Breast epithelium (tissue), 4 donors: ENCODE measurements at regions of chr13 and their contacts with region 1.

Region 1: GRCh38 chr13:95403828-95404522 is 102.7 kb upstream of the ABCC4 start:
- DNase-seq: peak; percentile 40 to 78
- H3K4me3 ChIP-seq: peak overlapping the region; percentile 10 to 47 (median 31)
- H3K27ac ChIP-seq: no peak overlapping the region
- H3K4me1 ChIP-seq: no peaks in the 10 kb centered on the region
- H3K27me3 ChIP-seq: no peaks in the 10 kb centered on the region
- CTCF ChIP-seq: peak; percentile 54 to 93 (median 76)
- POLR2A ChIP-seq: no peak

Region 2: DNA sequence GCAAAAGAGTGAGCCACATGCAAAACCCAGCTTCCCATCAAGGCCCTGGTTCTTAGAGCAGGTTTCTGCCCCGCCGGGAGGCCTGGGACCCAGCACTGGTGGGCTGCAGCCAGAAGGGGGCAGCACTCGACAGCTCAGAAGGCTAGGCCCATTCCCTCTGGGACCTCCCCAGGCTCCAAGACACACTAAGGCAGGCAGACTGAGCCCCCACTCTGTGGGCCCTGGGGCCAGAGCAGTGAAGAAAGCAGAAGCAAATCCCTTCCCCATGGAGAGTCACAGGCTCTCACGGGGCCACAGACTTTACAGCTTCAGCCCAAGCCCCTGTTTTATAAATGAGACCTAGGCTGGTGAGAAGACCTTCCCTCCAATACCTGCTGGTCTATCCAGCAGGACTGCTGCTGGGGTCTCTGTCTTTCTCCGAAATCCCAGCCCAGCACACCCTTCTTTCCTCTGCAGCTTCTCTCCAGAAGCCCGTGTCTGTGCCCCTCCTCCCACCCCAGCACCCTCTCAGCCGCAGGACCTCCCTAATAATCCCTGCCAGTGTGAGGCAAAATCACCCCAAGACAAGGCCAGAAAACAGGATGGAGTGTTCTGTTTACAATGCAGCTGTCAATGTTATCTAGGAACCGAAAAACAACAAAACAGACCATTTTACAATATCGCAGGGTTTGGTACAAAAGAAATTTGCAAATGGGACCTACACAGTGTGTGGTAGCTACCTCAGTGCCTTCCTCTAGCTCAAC is 212.0 kb before region 1 on chr13:
- intact Hi-C with region 1: loop called (anchors 10 kb)
- DNase-seq: no peak
- H3K4me3 ChIP-seq: no peak overlapping the region
- H3K27ac ChIP-seq: no peak overlapping the region
- H3K4me1 ChIP-seq: no peaks in the 10 kb centered on the region
- H3K27me3 ChIP-seq: no peaks in the 10 kb centered on the region
- CTCF ChIP-seq: peak in 2 of 3 donors; percentile 28 to 53
- POLR2A ChIP-seq: no peak

Region 3: GRCh38 chr13:95387733-95388207 is 16.2 kb before region 1 on chr13:
- intact Hi-C with region 1: no loop called
- DNase-seq: no peak
- H3K4me3 ChIP-seq: no peak overlapping the region
- H3K27ac ChIP-seq: no peak overlapping the region
- H3K4me1 ChIP-seq: no peaks in the 10 kb centered on the region
- H3K27me3 ChIP-seq: peaks cover 0 to 9% of the 10 kb centered on the region in 2 donors
- CTCF ChIP-seq: no peak
- POLR2A ChIP-seq: no peak